ENCODE measurements at regions of chr20 and their contacts with region 1.

Region 1: DNA sequence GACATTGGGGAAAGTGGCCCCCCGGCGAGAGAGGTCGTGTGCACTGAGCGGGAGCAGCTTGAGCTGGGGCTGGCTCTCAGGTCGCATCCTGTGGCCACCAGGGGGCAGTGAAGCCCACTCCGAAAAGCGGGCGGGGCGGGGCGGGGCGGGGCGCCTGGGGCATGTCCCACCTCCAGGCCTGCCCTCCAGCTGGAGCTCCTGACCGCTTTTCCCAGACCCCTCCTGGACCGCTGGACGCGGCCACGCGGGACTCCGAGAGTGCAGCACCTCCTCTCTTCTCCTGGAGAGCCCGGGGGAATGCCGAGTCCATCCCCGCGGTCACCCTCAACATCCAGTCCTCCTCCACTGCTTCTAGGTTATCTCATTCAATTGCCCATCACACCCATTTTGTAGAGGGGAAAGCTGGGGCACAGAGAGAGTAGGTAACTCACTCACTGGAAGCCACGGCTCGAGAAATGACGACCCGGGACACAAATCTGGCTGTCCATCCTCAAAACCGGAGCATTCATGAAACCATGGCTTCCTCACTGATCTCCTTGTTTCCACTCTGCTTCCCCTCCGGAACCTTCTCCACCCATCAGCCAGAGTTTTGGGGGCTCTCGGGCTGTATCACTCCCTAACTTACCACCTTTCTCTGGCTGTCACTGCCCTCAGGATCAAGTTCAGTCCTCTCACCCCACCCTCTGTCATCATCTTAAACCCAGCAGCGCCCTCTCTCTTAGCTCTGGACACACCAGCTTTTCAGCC is 24.1 kb downstream of the COX4I2 start:
- DNase-seq: peak; percentile 87
- ATAC-seq: peak; percentile 84
- H3K4me3 Mint-ChIP-seq: peak overlapping the region; percentile 74
- H3K27ac Mint-ChIP-seq: peak overlapping the region; percentile 79
- H3K4me1 Mint-ChIP-seq: peaks cover 23% of the 10 kb centered on the region
- H3K27me3 Mint-ChIP-seq: no peaks in the 10 kb centered on the region
- CTCF ChIP-seq: peak; percentile 88

Region 2: GRCh38 chr20:31572701-31573554 is 88.9 kb before region 1 on chr20:
- CTCF ChIA-PET with region 1: interaction called, 25 read pairs
- POLR2A ChIA-PET with region 1: no interaction called
- DNase-seq: peak; percentile 94
- ATAC-seq: peak; percentile 82
- H3K4me3 Mint-ChIP-seq: peak overlapping the region; percentile 83
- H3K27ac Mint-ChIP-seq: peak overlapping the region; percentile 97
- H3K4me1 Mint-ChIP-seq: peaks cover 60% of the 10 kb centered on the region
- H3K27me3 Mint-ChIP-seq: no peaks in the 10 kb centered on the region; the same call in 1 of the 2 replicates
- CTCF ChIP-seq: no peak

Region 3: GRCh38 chr20:31644701-31645100 is 17.1 kb before region 1 on chr20:
- CTCF ChIA-PET with region 1: interaction called, 23 read pairs
- POLR2A ChIA-PET with region 1: no interaction called
- DNase-seq: no peak
- ATAC-seq: no peak
- H3K4me3 Mint-ChIP-seq: no peak overlapping the region
- H3K27ac Mint-ChIP-seq: no peak overlapping the region
- H3K4me1 Mint-ChIP-seq: no peaks in the 10 kb centered on the region
- H3K27me3 Mint-ChIP-seq: no peaks in the 10 kb centered on the region; the same call in 1 of the 2 replicates
- CTCF ChIP-seq: no peak

Region 4: DNA sequence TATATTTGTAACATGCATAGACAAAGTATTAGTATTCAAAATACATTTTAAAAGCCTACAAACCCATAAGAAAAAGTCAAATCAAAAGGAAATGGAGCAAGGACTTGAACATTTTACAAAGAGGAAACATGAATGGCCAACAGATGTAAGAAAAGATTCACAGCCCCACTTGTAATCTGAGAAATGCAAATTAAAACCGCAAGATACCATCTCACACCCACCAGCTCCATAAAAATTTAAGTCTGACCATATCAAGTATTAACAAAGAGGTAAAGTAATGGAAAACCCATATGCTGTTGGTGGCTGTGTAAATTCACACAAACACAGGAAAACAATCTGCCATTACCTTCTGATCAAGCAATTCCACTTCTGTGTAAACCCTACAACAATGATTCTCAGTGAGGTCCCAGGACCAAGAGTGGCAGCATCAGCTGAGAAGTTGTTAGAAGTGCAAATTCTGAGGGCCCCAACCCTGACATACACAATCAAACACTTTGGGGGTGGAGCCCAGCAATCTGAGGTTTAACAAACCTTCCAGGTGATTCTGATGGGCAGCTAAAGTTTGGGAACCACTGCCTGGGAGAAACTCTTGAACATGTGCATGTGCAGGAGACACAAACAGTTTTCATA is 30.0 kb after region 1 on chr20:
- CTCF ChIA-PET with region 1: interaction called, 32 read pairs
- POLR2A ChIA-PET with region 1: interaction called, 3 read pairs
- DNase-seq: no peak
- ATAC-seq: no peak
- H3K4me3 Mint-ChIP-seq: no peak overlapping the region
- H3K27ac Mint-ChIP-seq: peak overlapping the region; percentile 75
- H3K4me1 Mint-ChIP-seq: peaks cover 45% of the 10 kb centered on the region
- H3K27me3 Mint-ChIP-seq: no peaks in the 10 kb centered on the region
- CTCF ChIP-seq: no peak

Region 5: GRCh38 chr20:31712564-31713311 is 50.9 kb after region 1 on chr20:
- CTCF ChIA-PET with region 1: interaction called, 488 read pairs
- POLR2A ChIA-PET with region 1: interaction called, 11 read pairs
- DNase-seq: peak; percentile 57
- ATAC-seq: peak; percentile 81
- H3K4me3 Mint-ChIP-seq: peak overlapping the region; percentile 45
- H3K27ac Mint-ChIP-seq: peak overlapping the region; percentile 93
- H3K4me1 Mint-ChIP-seq: peaks cover 88% of the 10 kb centered on the region
- H3K27me3 Mint-ChIP-seq: no peaks in the 10 kb centered on the region
- CTCF ChIP-seq: no peak

Region 6: DNA sequence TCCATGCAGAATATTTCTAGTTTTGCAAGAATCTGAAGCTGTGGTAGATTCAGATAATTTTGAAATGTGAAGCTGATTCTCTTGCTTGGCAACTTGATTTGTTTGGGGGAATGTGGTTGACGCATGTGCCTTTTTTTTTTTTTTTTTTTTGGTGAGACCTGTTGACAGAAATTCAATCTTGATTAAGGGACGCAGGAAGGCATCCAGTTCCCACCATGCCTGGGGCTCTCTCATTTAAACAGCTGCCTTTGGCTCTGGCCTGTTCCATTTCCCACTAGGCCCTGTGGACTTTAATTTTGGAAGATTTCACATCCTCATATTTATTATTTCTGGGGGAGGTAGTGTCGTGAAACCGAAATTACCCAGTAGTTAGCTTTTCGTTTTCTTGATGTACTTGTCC is 85.8 kb after region 1 on chr20:
- CTCF ChIA-PET with region 1: interaction called, 15 read pairs
- POLR2A ChIA-PET with region 1: no interaction called
- DNase-seq: no peak
- ATAC-seq: no peak
- H3K4me3 Mint-ChIP-seq: no peak overlapping the region
- H3K27ac Mint-ChIP-seq: peak overlapping the region; percentile 34; the same call in 1 of the 2 replicates
- H3K4me1 Mint-ChIP-seq: peaks cover 5% of the 10 kb centered on the region
- H3K27me3 Mint-ChIP-seq: no peaks in the 10 kb centered on the region
- CTCF ChIP-seq: no peak

Measured in WTC11 (cell line).